ENCODE measurements at regions of chr4 and their contacts with region 1.

Region 1: DNA sequence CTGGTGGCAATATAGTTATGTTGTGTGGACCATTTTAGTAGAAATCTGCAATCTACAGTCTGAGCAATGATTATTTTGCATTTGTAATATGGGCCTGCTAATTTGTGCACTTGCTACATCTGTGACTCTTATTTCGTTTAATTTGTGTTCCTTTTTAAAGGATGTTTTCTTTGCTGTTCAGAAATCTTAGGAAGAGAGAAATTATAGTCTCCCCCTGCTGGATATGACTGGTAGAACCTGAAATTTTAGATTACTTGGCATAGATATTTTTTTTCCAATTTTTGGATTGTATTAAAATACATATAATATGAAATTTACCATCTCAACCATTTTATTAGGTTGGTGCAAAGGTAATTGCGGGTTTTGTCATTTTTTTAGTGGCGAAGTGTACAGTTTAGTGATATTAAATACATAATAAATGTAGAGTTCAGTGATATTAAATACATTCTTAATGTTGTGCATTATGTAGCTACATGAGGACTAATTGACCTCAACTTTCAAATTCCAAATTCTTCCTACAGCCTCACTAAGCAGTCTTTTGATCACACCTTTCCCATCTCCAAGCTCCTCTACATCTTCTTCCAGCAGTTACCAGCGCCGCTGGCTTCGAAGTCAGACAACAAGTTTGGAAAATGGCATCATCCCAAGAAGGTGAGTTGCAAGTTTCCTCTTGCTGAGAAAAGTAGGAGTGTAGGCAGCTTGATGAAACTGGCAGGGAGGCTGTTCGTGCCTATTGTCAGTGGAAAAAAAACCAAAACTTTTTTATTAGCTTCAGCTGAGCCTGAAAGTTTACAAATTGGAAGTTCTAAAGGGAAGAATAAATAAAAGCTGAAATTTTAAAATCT is 82.2 kb downstream of the FNIP2 start:
- DNase-seq: no peak
- ATAC-seq: peak; percentile 35; the same call in 1 of the 3 replicates
- H3K4me3 ChIP-seq: no peak overlapping the region
- H3K27ac ChIP-seq: no peak overlapping the region
- H3K4me1 ChIP-seq: no peaks in the 10 kb centered on the region
- H3K27me3 ChIP-seq: no peaks in the 10 kb centered on the region; a peak in 1 of 4 replicates
- CTCF ChIP-seq: peak; percentile 49 to 55 (median 53); a peak in 5 of 6 replicates
- EP300 ChIP-seq: no peak
- POLR2A ChIP-seq: no peak
- RAD21 ChIP-seq: peak; percentile 50

Region 2: DNA sequence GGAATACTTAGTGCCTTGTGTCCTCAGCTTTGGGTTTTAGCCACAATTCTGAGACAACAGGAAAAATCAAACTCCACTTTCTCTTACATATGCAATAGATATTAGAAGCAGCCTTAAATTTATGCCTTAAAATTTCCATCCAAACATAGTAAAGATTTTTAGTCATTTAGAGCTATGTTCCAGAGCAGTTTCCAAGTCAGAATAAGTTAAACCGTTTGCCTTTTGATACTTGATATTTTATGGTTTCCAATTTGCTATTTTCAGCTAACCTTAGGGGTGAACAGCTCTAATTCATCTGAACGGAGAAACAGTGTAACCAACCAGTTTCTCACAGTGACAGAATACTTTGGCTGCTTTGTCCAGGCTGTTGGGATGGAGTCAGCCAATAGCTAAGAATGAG is 455.1 kb before region 1 on chr4:
- CTCF ChIA-PET with region 1: no interaction called
- POLR2A ChIA-PET with region 1: no interaction called
- RAD21 ChIA-PET with region 1: no interaction called
- SMC1A ChIA-PET with region 1: no interaction called
- in situ Hi-C with region 1: no loop called
- intact Hi-C with region 1: no loop called
- DNase-seq: no peak
- ATAC-seq: no peak
- H3K4me3 ChIP-seq: no peak overlapping the region
- H3K27ac ChIP-seq: no peak overlapping the region
- H3K4me1 ChIP-seq: no peaks in the 10 kb centered on the region
- H3K27me3 ChIP-seq: no peaks in the 10 kb centered on the region
- CTCF ChIP-seq: no peak
- EP300 ChIP-seq: no peak
- POLR2A ChIP-seq: no peak
- RAD21 ChIP-seq: no peak

Region 3: DNA sequence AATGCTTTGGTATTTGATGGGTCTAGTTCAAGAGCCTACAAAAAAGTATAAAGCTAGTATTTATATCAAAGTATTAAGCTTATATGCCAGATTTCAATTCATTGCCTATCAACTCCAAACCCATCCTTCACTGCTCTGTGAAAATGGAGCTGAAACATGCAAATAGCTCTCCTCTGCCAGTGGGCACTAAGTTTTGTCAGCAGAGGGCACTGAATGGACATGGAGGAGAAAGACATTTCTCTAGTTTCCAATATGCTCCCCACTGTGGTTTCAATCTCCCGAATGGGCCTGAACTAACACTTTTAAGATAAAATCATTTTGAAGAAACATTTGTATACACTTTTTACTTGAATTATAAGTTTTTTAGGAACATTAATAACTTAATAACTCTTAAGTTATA is 140.2 kb before region 1 on chr4:
- CTCF ChIA-PET with region 1: interaction called, 12 read pairs
- POLR2A ChIA-PET with region 1: no interaction called
- RAD21 ChIA-PET with region 1: interaction called, 11 read pairs
- SMC1A ChIA-PET with region 1: interaction called, 28 read pairs
- in situ Hi-C with region 1: no loop called
- intact Hi-C with region 1: no loop called
- DNase-seq: no peak
- ATAC-seq: no peak; the same call in 2 of the 3 replicates
- H3K4me3 ChIP-seq: no peak overlapping the region
- H3K27ac ChIP-seq: no peak overlapping the region
- H3K4me1 ChIP-seq: no peaks in the 10 kb centered on the region
- H3K27me3 ChIP-seq: no peaks in the 10 kb centered on the region
- CTCF ChIP-seq: peak in 2 of 3 experiments; percentile 7 to 24; a peak in 1 of 6 replicates
- EP300 ChIP-seq: no peak
- POLR2A ChIP-seq: no peak
- RAD21 ChIP-seq: 0 out of 2 replicates have a peak, but pooled peaks have one; percentile 7

Region 4: GRCh38 chr4:158778156-158778711 is 72.8 kb before region 1 on chr4:
- CTCF ChIA-PET with region 1: interaction called, 61 read pairs
- POLR2A ChIA-PET with region 1: no interaction called
- RAD21 ChIA-PET with region 1: interaction called, 33 read pairs
- SMC1A ChIA-PET with region 1: interaction called, 42 read pairs
- in situ Hi-C with region 1: no loop called
- intact Hi-C with region 1: no loop called
- DNase-seq: peak; percentile 60
- ATAC-seq: peak; percentile 96
- H3K4me3 ChIP-seq: no peak overlapping the region
- H3K27ac ChIP-seq: no peak overlapping the region
- H3K4me1 ChIP-seq: peaks cover 10% of the 10 kb centered on the region; the same call in 1 of the 2 replicates
- H3K27me3 ChIP-seq: 0 out of 4 replicates have a peak, but pooled peaks cover 0 to 2% of the 10 kb centered on the region in 2 experiments
- CTCF ChIP-seq: no peak
- EP300 ChIP-seq: no peak
- POLR2A ChIP-seq: no peak
- RAD21 ChIP-seq: no peak

Region 5: GRCh38 chr4:158817562-158818296 is 33.3 kb before region 1 on chr4:
- CTCF ChIA-PET with region 1: interaction called, 9 read pairs
- POLR2A ChIA-PET with region 1: no interaction called
- RAD21 ChIA-PET with region 1: interaction called, 39 read pairs
- SMC1A ChIA-PET with region 1: interaction called, 34 read pairs
- in situ Hi-C with region 1: no loop called
- intact Hi-C with region 1: no loop called
- DNase-seq: peak; percentile 64
- ATAC-seq: peak; percentile 66
- H3K4me3 ChIP-seq: no peak overlapping the region
- H3K27ac ChIP-seq: 0 out of 2 replicates have a peak overlapping the region, but pooled peaks have one; percentile 45
- H3K4me1 ChIP-seq: peaks cover 2% of the 10 kb centered on the region; the same call in 1 of the 2 replicates
- H3K27me3 ChIP-seq: no peaks in the 10 kb centered on the region
- CTCF ChIP-seq: no peak
- EP300 ChIP-seq: peak in 1 of 2 experiments; percentile 38; a peak in 1 of 4 replicates
- POLR2A ChIP-seq: no peak
- RAD21 ChIP-seq: no peak

Region 6: DNA sequence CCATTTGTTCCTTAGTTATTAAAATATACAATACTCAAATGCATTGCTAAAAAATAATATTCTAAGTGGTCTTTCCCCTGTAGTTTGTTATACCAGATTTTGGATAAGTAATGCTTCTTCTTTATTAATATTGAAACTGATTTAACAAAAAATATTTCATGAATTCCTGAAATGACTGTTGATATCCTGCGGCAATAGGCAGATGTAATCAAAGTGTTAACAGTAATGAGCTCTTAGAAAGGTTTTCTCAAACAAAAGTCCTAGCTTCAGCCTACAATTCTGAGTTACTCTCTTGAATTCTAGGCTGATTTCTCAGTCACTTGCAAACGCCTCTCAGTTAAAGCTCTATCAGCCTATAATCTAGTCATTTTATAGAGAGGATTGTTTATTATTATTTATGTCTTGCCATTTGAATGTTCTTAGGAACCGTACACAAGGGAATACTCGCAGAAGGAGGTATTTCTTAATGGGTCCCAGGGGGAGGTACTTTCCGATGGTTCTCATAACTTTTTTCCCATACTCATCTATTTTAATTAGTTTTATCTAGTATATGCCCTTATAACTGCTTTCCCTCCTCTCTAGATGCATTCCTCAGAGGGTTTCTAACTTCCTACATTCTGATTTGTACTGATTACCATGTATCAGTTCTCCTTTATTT is 14.6 kb after region 1 on chr4:
- CTCF ChIA-PET with region 1: interaction called, 23 read pairs
- POLR2A ChIA-PET with region 1: interaction called, 4 read pairs
- RAD21 ChIA-PET with region 1: interaction called, 14 read pairs
- SMC1A ChIA-PET with region 1: interaction called, 23 read pairs
- in situ Hi-C with region 1: no loop called
- intact Hi-C with region 1: no loop called
- DNase-seq: peak; percentile 59
- ATAC-seq: peak; percentile 41
- H3K4me3 ChIP-seq: no peak overlapping the region
- H3K27ac ChIP-seq: peak overlapping the region; percentile 19; the same call in 1 of the 2 replicates
- H3K4me1 ChIP-seq: peaks cover 12% of the 10 kb centered on the region
- H3K27me3 ChIP-seq: no peaks in the 10 kb centered on the region
- CTCF ChIP-seq: no peak
- EP300 ChIP-seq: no peak
- POLR2A ChIP-seq: no peak
- RAD21 ChIP-seq: no peak

Region 7: DNA sequence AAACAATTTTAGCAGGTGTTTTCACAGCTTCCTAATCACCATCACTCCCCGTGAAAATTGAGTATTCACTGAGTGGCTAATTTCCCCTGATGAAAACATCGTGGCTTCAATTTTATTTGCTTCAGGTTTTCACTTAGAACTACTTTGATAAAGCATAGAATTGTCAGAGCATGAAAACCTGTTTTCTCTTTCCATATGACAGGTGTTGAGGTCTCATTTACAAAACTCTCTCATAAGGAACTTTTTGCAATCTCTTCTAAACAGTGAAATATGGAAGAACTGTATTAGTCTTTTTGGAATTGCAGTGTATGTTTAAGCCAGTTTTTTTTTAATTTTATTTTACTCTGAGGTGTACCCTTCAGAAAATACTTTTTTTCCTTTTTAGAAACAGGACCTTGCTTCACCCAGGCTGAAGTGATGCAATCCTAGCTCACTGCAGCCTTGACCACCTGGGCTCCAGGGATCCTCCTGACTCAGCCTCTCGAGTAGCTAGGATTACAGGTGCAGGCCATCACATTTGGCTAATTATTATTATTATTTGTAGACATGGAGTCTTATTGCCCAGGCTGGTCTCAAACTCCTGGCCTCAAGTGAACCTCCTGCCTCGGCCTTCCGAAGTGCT is 140.6 kb after region 1 on chr4:
- CTCF ChIA-PET with region 1: no interaction called
- POLR2A ChIA-PET with region 1: no interaction called
- RAD21 ChIA-PET with region 1: no interaction called
- SMC1A ChIA-PET with region 1: no interaction called
- in situ Hi-C with region 1: no loop called
- intact Hi-C with region 1: no loop called
- DNase-seq: no peak
- ATAC-seq: no peak; the same call in 2 of the 3 replicates
- H3K4me3 ChIP-seq: no peak overlapping the region
- H3K27ac ChIP-seq: no peak overlapping the region
- H3K4me1 ChIP-seq: peaks cover 5% of the 10 kb centered on the region; the same call in 1 of the 2 replicates
- H3K27me3 ChIP-seq: no peaks in the 10 kb centered on the region
- CTCF ChIP-seq: no peak
- EP300 ChIP-seq: no peak
- POLR2A ChIP-seq: no peak
- RAD21 ChIP-seq: no peak

Region 8: GRCh38 chr4:159206427-159206871 is 355.4 kb after region 1 on chr4:
- CTCF ChIA-PET with region 1: interaction called, 153 read pairs
- POLR2A ChIA-PET with region 1: interaction called, 3 read pairs
- RAD21 ChIA-PET with region 1: interaction called, 25 read pairs
- SMC1A ChIA-PET with region 1: interaction called, 78 read pairs
- in situ Hi-C with region 1: loop called (anchors 5 kb)
- intact Hi-C with region 1: no loop called
- DNase-seq: peak; percentile 83
- ATAC-seq: peak; percentile 84
- H3K4me3 ChIP-seq: no peak overlapping the region
- H3K27ac ChIP-seq: peak overlapping the region; percentile 60
- H3K4me1 ChIP-seq: peaks cover 27% of the 10 kb centered on the region
- H3K27me3 ChIP-seq: no peaks in the 10 kb centered on the region
- CTCF ChIP-seq: no peak
- EP300 ChIP-seq: no peak
- POLR2A ChIP-seq: no peak
- RAD21 ChIP-seq: no peak